Right ventricle myocardium superior (tissue), 1 donor: ENCODE measurements at regions of chr17 and their contacts with region 1.

Region 1: GRCh38 chr17:45640141-45640850 is 143.8 kb upstream of the CRHR1 start:
- DNase-seq: peak; percentile 69
- ATAC-seq: peak; percentile 74

Region 2: GRCh38 chr17:45431531-45432404 is 208.5 kb before region 1 on chr17:
- intact Hi-C with region 1: no loop called
- DNase-seq: peak; percentile 83
- ATAC-seq: peak; percentile 39

Region 3: DNA sequence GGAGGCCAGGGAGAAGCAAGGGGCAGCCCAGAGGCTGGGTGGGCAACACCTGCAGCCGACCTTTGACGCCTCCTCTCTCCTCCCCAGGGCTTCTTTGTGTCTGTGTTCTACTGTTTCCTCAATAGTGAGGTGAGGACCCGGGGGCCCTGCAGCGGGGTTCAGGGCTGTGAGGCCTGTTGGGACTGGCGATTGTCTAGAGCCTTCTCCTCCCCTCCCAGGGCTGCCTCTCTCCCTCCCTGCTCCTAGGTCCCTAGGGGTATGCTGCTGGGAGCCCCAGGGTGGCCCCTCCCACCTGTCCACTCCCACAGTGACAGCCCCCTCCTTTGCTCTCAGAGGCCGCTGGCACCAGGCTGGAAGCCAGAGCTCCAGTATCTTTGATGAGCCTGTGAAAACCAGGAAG is 193.6 kb after region 1 on chr17:
- intact Hi-C with region 1: loop called (anchors 2 kb)
- DNase-seq: no peak
- ATAC-seq: no peak